Dorsolateral prefrontal cortex (tissue), 120 donors: ENCODE measurements at regions of chr14 and their contacts with region 1.

Region 1: GRCh38 chr14:73058224-73058921 is at the start of gene RBM25:
- DNase-seq: peak; percentile 94 to 99 (median 96)
- H3K4me3 ChIP-seq: peak within 1 kb of the TSS; percentile 59 to 98 (median 89)
- H3K27ac ChIP-seq: peak within 1 kb of the TSS; percentile 79 to 99 (median 96)
- H3K27me3 ChIP-seq: no peaks in the 10 kb centered on the region
- CTCF ChIP-seq: peak in 54 of 56 donors; percentile 34 to 80 (median 55)
- total RNA-seq, gene RBM25: 73.2 to 124 (median 94.5) TPM

Region 2: DNA sequence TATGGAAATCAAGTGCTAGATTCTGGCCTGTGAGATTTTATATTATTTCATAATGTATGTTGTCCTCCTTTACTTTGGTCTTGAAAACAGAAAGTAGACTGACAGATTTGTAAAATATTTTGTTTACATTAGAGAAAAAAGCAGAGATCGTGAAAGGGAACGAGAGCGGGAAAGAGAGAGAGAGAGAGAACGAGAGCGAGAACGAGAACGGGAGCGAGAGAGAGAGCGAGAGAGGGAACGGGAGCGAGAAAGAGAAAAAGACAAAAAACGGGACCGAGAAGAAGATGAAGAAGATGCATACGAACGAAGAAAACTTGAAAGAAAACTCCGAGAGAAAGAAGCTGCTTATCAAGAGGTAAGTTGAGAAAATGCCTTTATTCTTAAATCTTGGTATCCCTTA is 47.4 kb after region 1 on chr14:
- intact Hi-C with region 1: no loop called
- DNase-seq: no peak
- H3K4me3 ChIP-seq: no peak overlapping the region
- H3K27ac ChIP-seq: no peak overlapping the region
- H3K27me3 ChIP-seq: no peaks in the 10 kb centered on the region
- CTCF ChIP-seq: no peak

Region 3: GRCh38 chr14:73136387-73137225 is 78.2 kb after region 1 on chr14 and contains the start of gene PSEN1:
- intact Hi-C with region 1: loop called (anchors 2 to 5 kb)
- DNase-seq: peak; percentile 95 to 99 (median 98)
- H3K4me3 ChIP-seq: peak within 1 kb of the TSS; percentile 63 to 98 (median 92)
- H3K27ac ChIP-seq: peak within 1 kb of the TSS; percentile 45 to 100 (median 94)
- H3K27me3 ChIP-seq: no peaks in the 10 kb centered on the region
- CTCF ChIP-seq: peak in 13 of 56 donors; percentile 1 to 31 (median 13)
- total RNA-seq, gene PSEN1: 53.3 to 206 (median 92.7) TPM

Region 4: GRCh38 chr14:73269729-73270531 is 211.6 kb after region 1 on chr14:
- intact Hi-C with region 1: loop called in 1 of 2 experiments (anchors 10 kb)
- DNase-seq: peak in 3 of 10 donors; percentile 22 to 34 (median 32)
- H3K4me3 ChIP-seq: peak overlapping the region; percentile 20 to 67 (median 49)
- H3K27ac ChIP-seq: peak overlapping the region in 11 of 59 donors; percentile 2 to 56 (median 35)
- H3K27me3 ChIP-seq: no peaks in the 10 kb centered on the region
- CTCF ChIP-seq: no peak

Region 5: DNA sequence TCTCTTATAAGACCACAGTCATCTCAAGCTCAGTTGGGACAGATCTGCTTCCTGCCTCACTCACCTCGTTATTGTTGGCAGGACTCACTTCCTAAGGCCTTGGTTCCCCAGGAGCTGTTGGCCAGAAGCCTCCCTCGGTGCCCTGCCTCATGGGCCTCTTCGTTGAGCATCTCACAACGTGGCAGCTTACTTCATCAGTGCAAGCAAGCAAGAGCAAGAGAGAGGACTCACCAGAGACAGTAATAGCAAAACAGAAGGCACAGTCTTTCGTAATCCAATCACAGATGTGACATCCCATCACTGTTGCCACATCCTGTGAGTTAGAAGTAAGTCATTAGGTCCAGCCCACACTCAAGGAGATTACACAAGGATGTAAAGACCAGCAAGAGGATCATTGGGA is 405.0 kb after region 1 on chr14:
- intact Hi-C with region 1: loop called in 1 of 2 experiments (anchors 10 kb)
- DNase-seq: peak in 1 of 10 donors; percentile 31
- H3K4me3 ChIP-seq: peak overlapping the region in 1 of 59 donors; percentile 53
- H3K27ac ChIP-seq: peak overlapping the region in 37 of 59 donors; percentile 18 to 89 (median 71)
- H3K27me3 ChIP-seq: no peaks in the 10 kb centered on the region
- CTCF ChIP-seq: no peak

Region 6: DNA sequence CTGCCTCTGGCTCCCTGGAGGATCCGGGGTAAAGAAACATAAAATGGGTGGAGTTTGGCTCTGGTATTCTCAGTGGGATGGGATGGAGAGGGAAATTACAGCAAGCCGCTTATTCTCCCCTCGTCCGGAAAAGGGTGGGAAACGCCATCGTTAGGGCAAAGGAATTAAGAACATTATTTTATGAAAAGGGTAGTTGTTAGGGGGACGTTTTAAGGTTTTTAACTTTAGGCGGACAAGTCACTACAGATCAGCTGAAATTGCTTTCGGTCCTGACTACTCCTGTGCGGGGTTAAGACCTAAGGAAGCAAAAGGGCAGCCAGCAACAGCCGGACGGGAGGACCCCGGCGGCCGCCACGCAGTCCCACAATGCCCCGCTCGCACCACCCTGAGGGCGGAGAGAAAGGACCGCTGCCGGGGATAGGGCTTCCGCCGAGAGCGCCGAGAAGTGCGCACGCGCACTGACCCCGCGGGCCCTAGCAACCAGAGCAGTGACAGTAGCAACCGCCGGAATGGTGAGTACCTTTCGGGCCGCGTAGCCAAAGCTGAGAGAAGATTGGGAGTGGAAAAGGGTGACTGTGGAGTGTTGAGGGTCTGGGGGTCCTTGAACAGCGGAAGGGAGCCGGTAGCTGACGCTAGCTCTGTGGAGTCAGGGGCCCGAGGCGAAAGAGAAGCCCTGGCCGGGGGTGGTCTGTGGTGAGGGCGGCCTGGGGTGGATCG is 586.3 kb after region 1 on chr14 and contains the start of gene DNAL1:
- intact Hi-C with region 1: loop called in 1 of 2 experiments (anchors 10 kb)
- DNase-seq: peak; percentile 89 to 96 (median 92)
- H3K4me3 ChIP-seq: peak within 1 kb of the TSS; percentile 65 to 100 (median 87)
- H3K27ac ChIP-seq: peak within 1 kb of the TSS; percentile 44 to 95 (median 88)
- H3K27me3 ChIP-seq: no peaks in the 10 kb centered on the region
- CTCF ChIP-seq: peak in 40 of 56 donors; percentile 11 to 65 (median 38)
- total RNA-seq, gene DNAL1: 17.3 to 60.9 (median 39.3) TPM